Naive thymus-derived CD4-positive, alpha-beta T cell (primary cell): ENCODE measurements at regions of chr11 and their contacts with region 1.

Region 1: GRCh38 chr11:121318848-121319834 is 26.6 kb downstream of the SC5D start:
- DNase-seq: peak in 7 of 9 donors; percentile 17 to 64 (median 56)
- ATAC-seq: peak; percentile 87
- H3K4me3 ChIP-seq: no peak overlapping the region
- H3K4me3 Mint-ChIP-seq: peak overlapping the region in 1 of 10 donors; percentile 47
- H3K27ac ChIP-seq: no peak overlapping the region
- H3K27ac Mint-ChIP-seq: peak overlapping the region in 7 of 9 donors; percentile 4 to 49 (median 9)
- H3K4me1 ChIP-seq: peaks cover 0 to 6% of the 10 kb centered on the region in 2 donors
- H3K4me1 Mint-ChIP-seq: peaks cover 15 to 28% (median 23%) of the 10 kb centered on the region in 7 donors
- H3K27me3 ChIP-seq: no peaks in the 10 kb centered on the region
- H3K27me3 Mint-ChIP-seq: peaks cover 0 to 6% (median 0%) of the 10 kb centered on the region in 5 donors

Region 2: GRCh38 chr11:121249039-121249663 is 70.0 kb before region 1 on chr11:
- CTCF ChIA-PET with region 1: no interaction called
- POLR2A ChIA-PET with region 1: interaction called, 3 read pairs
- intact Hi-C with region 1: loop called in 1 of 2 experiments (anchors 1 kb)
- DNase-seq: peak in 6 of 9 donors; percentile 36 to 56 (median 41)
- ATAC-seq: peak; percentile 75
- H3K4me3 ChIP-seq: no peak overlapping the region
- H3K4me3 Mint-ChIP-seq: peak overlapping the region in 1 of 10 donors; percentile 19
- H3K27ac ChIP-seq: no peak overlapping the region
- H3K27ac Mint-ChIP-seq: peak overlapping the region in 1 of 9 donors; percentile 23
- H3K4me1 ChIP-seq: no peaks in the 10 kb centered on the region
- H3K4me1 Mint-ChIP-seq: peaks cover 0 to 10% (median 3%) of the 10 kb centered on the region in 7 donors
- H3K27me3 ChIP-seq: no peaks in the 10 kb centered on the region
- H3K27me3 Mint-ChIP-seq: peaks cover 0 to 12% (median 5%) of the 10 kb centered on the region in 5 donors

Region 3: DNA sequence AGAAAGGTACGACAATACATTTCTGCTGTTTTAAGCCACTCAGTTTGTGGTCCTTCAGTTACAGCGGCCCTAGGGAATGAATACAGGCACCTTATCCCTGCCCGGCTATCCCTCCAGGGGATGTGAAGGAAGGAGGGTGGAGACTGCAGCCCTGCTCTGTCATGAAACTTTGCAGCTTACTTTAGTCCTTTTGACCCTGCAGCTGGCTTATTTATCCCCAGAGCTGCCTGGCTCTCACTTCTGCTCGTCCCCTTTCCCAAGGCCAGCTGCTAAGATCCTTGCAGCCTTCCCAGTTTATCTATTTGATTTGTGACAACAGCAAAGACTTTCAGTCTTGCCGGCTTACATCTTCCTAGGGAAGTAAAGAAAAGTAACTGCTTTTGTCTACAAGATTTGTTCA is 28.7 kb after region 1 on chr11:
- CTCF ChIA-PET with region 1: no interaction called
- POLR2A ChIA-PET with region 1: no interaction called
- intact Hi-C with region 1: no loop called
- DNase-seq: no peak
- ATAC-seq: no peak
- H3K4me3 ChIP-seq: no peak overlapping the region
- H3K4me3 Mint-ChIP-seq: no peak overlapping the region
- H3K27ac ChIP-seq: no peak overlapping the region
- H3K27ac Mint-ChIP-seq: peak overlapping the region in 1 of 9 donors; percentile 46
- H3K4me1 ChIP-seq: no peaks in the 10 kb centered on the region
- H3K4me1 Mint-ChIP-seq: peaks cover 0 to 9% (median 0%) of the 10 kb centered on the region in 7 donors
- H3K27me3 ChIP-seq: no peaks in the 10 kb centered on the region
- H3K27me3 Mint-ChIP-seq: peaks cover 0 to 10% (median 0%) of the 10 kb centered on the region in 5 donors

Region 4: GRCh38 chr11:121417055-121417551 is 98.0 kb after region 1 on chr11:
- CTCF ChIA-PET with region 1: no interaction called
- POLR2A ChIA-PET with region 1: no interaction called
- intact Hi-C with region 1: loop called in 1 of 2 experiments (anchors 2 kb)
- DNase-seq: peak; percentile 28 to 55 (median 40)
- ATAC-seq: peak; percentile 59
- H3K4me3 ChIP-seq: peak overlapping the region; percentile 20
- H3K4me3 Mint-ChIP-seq: peak overlapping the region; percentile 25 to 75 (median 62)
- H3K27ac ChIP-seq: peak overlapping the region; percentile 48
- H3K27ac Mint-ChIP-seq: peak overlapping the region; percentile 79 to 96 (median 89)
- H3K4me1 ChIP-seq: peaks cover 36 to 53% of the 10 kb centered on the region in 2 donors
- H3K4me1 Mint-ChIP-seq: peaks cover 47 to 82% (median 70%) of the 10 kb centered on the region in 7 donors
- H3K27me3 ChIP-seq: no peaks in the 10 kb centered on the region
- H3K27me3 Mint-ChIP-seq: no peaks in the 10 kb centered on the region

Region 5: DNA sequence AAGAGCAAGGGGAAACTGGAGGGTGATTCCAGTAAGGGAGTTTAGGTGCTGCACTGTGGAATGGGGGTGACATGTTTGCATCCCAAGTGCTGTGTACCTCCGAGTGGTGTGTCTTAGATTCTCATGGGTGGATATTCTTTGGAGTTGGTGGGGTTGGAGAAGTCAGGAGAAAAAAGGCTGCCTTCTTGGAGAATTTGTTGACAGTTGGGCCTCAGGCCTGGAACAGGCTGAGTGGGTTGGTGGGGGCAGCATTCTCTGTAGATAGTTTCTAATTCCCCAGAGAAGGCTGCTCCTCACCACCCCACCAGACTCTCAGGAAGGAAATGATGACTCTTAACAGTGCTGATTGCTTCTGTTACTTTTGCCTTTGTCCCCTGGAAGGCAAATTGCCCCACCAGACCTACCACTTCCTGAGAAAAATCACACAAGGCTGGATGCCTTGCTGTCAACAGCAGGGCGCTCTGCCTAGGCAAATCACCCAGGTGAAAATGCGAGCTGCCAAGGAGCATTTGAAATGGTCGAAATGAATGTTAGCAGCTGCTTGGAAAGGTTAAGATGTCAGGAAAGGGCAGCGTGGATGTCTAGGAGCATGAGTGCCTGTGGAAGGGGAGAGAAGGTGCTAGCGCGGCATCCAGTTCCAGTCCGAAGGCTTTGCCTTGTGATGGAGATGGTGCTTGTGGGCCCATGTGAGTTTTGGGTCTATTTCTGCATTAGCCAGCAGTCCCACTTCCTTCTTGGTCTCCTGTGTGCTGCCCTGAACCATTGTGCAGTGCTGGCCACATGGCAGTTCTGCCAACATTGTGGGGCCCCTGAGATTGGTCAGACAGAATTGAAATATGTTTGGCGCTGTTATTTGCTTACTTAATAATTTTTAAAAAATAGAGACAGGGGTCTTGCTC is 163.3 kb after region 1 on chr11:
- CTCF ChIA-PET with region 1: interaction called, 3 read pairs
- POLR2A ChIA-PET with region 1: interaction called, 3 read pairs
- intact Hi-C with region 1: loop called (anchors 1 kb)
- DNase-seq: peak in 8 of 9 donors; percentile 45 to 72 (median 67)
- ATAC-seq: peak; percentile 87
- H3K4me3 ChIP-seq: peak overlapping the region; percentile 30
- H3K4me3 Mint-ChIP-seq: peak overlapping the region; percentile 73 to 89 (median 86)
- H3K27ac ChIP-seq: peak overlapping the region; percentile 61
- H3K27ac Mint-ChIP-seq: peak overlapping the region; percentile 84 to 97 (median 94)
- H3K4me1 ChIP-seq: peaks cover 25 to 44% of the 10 kb centered on the region in 2 donors
- H3K4me1 Mint-ChIP-seq: peaks cover 50 to 90% (median 81%) of the 10 kb centered on the region in 7 donors
- H3K27me3 ChIP-seq: no peaks in the 10 kb centered on the region
- H3K27me3 Mint-ChIP-seq: no peaks in the 10 kb centered on the region

Region 6: GRCh38 chr11:121591405-121592033 is 272.4 kb after region 1 on chr11:
- CTCF ChIA-PET with region 1: interaction called, 7 read pairs
- POLR2A ChIA-PET with region 1: no interaction called
- intact Hi-C with region 1: loop called (anchors 1 kb)
- DNase-seq: peak in 8 of 9 donors; percentile 56 to 81 (median 74)
- ATAC-seq: peak; percentile 88
- H3K4me3 ChIP-seq: no peak overlapping the region
- H3K4me3 Mint-ChIP-seq: no peak overlapping the region
- H3K27ac ChIP-seq: no peak overlapping the region
- H3K27ac Mint-ChIP-seq: peak overlapping the region in 7 of 9 donors; percentile 44 to 89 (median 70)
- H3K4me1 ChIP-seq: no peaks in the 10 kb centered on the region
- H3K4me1 Mint-ChIP-seq: peaks cover 9 to 29% (median 14%) of the 10 kb centered on the region in 7 donors
- H3K27me3 ChIP-seq: no peaks in the 10 kb centered on the region
- H3K27me3 Mint-ChIP-seq: no peaks in the 10 kb centered on the region

Region 7: DNA sequence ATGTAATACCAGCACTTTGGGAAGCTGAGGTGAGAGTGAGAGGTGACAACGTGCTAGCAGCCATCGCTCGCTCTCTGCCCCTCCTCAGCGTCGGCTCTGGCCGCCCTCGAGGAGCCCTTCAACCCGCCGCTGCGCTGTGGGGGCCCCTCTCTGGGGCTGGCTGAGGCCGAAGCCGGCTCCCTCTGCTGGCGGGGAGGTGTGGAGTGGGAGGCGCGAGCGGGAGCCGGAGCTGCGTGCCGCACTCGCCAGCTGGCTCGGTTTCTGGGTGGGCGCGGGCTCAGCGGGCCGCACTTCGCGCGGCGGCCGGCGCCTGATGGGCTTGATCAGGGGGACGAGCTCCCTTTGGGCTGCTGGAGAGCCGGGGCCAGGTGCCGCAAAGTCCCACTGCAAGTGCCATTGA is 1237.5 kb after region 1 on chr11:
- CTCF ChIA-PET with region 1: no interaction called
- POLR2A ChIA-PET with region 1: no interaction called
- intact Hi-C with region 1: no loop called
- DNase-seq: peak in 2 of 9 donors; percentile 19 to 27
- ATAC-seq: no peak
- H3K4me3 ChIP-seq: no peak overlapping the region
- H3K4me3 Mint-ChIP-seq: peak overlapping the region in 3 of 10 donors; percentile 44 to 76 (median 51)
- H3K27ac ChIP-seq: no peak overlapping the region
- H3K27ac Mint-ChIP-seq: no peak overlapping the region
- H3K4me1 ChIP-seq: no peaks in the 10 kb centered on the region
- H3K4me1 Mint-ChIP-seq: peaks cover 0 to 4% (median 0%) of the 10 kb centered on the region in 7 donors
- H3K27me3 ChIP-seq: no peaks in the 10 kb centered on the region
- H3K27me3 Mint-ChIP-seq: peaks cover 5 to 26% (median 16%) of the 10 kb centered on the region in 5 donors